ENCODE measurements at regions of chr1 and their contacts with region 1.

Region 1: DNA sequence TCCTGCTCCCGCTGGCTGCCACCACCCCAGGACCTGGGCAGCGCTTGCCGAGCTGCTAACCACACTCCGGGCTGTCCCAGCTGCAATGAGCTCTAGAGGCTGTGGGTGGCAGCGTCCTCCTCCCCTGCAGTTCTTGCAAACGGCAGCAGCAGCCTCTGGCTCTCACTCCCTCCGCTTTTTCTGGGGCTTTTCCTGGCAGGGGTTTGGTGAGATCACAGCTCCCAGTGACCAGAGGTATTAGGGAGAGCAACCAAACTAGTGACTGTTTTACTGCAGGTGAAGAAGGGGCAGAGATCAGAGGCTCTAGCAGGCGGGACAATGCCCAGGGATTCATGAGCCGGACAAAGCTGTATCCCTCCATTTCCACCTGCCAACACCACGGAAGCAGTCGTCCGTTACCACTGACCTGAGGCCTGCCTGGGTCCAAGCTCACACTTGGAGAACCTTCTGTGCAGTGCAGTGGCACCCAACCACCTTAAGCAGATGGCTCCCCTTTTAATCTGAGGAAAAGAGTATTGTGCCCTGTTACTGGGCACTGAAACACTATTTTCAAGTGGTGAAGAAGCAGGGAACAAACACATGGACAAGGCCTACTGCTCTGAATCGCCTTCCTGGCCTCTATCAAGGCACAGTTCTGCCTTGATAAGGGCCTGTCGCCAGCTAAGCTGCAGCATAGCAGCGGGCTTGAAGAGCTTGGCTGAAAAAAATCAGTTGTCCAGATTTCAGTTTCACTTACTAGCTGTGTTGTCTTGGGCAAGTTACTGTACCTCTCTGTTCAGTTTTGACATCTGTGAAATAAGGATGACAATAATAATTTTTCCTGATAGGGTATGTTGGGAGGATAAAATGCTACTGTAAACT is at the start of gene F5:
- DNase-seq: peak; percentile 74
- H3K4me3 ChIP-seq: peak within 1 kb of the TSS in 2 of 4 donors; percentile 7 to 35
- H3K27ac ChIP-seq: no peak within 1 kb of the TSS
- H3K4me1 ChIP-seq: peaks cover 0 to 11% (median 4%) of the 10 kb centered on the region in 4 donors
- H3K27me3 ChIP-seq: peaks cover 10% of the 10 kb centered on the region
- CTCF ChIP-seq: peak; percentile 33 to 66 (median 44)
- EP300 ChIP-seq: no peak
- POLR2A ChIP-seq: no peak
- total RNA-seq, gene F5: 0.32 to 0.82 (median 0.37) TPM in 3 of 4 donors, not detected in the other

Region 2: GRCh38 chr1:169809370-169810095 is 222.9 kb after region 1 on chr1:
- in situ Hi-C with region 1: loop called in 1 of 4 experiments (anchors 25 kb)
- intact Hi-C with region 1: no loop called
- DNase-seq: no peak
- H3K4me3 ChIP-seq: no peak overlapping the region
- H3K27ac ChIP-seq: no peak overlapping the region
- H3K4me1 ChIP-seq: no peaks in the 10 kb centered on the region
- H3K27me3 ChIP-seq: no peaks in the 10 kb centered on the region
- CTCF ChIP-seq: peak; percentile 49 to 56 (median 54)
- EP300 ChIP-seq: no peak
- POLR2A ChIP-seq: no peak

Measured in transverse colon (tissue), 4 donors.